ENCODE measurements at regions of chr4 and their contacts with region 1.

Region 1: GRCh38 chr4:40897557-40898203 is 147.9 kb downstream of the NSUN7 start:
- DNase-seq: peak; percentile 53
- ATAC-seq: peak; percentile 92
- H3K4me3 ChIP-seq: no peak overlapping the region
- H3K27ac ChIP-seq: no peak overlapping the region
- H3K4me1 ChIP-seq: no peaks in the 10 kb centered on the region
- H3K27me3 ChIP-seq: no peaks in the 10 kb centered on the region
- CTCF ChIP-seq: peak; percentile 82
- EP300 ChIP-seq: no peak
- POLR2A ChIP-seq: no peak
- RAD21 ChIP-seq: no peak; the same call in 1 of the 2 replicates

Region 2: GRCh38 chr4:40333921-40334352 is 563.7 kb before region 1 on chr4:
- CTCF ChIA-PET with region 1: no interaction called
- POLR2A ChIA-PET with region 1: no interaction called
- in situ Hi-C with region 1: no loop called
- intact Hi-C with region 1: no loop called
- DNase-seq: no peak
- ATAC-seq: no peak
- H3K4me3 ChIP-seq: no peak overlapping the region
- H3K27ac ChIP-seq: no peak overlapping the region
- H3K4me1 ChIP-seq: peaks cover 9% of the 10 kb centered on the region
- H3K27me3 ChIP-seq: peaks cover 2 to 9% of the 10 kb centered on the region in 2 experiments; a peak in 4 of 5 replicates
- CTCF ChIP-seq: no peak
- EP300 ChIP-seq: no peak
- POLR2A ChIP-seq: no peak
- RAD21 ChIP-seq: no peak

Region 3: DNA sequence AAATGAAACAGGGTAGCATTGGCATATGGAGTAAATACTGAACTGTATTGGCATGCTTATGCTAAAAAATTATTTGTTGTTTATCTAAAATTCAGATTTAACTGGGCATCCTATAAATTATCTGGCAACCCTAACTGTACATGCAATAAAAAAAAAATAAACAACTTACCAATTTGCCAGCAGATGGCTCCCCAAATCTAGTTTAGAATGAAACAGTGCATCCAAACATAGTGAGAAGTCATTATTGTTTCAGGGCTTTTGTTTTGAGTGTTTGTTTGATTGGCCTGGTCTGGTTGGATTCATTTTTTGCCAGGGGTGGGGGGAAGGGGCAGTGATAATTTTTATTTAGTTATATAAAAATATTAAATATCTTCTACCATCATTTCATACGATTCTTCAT is 160.8 kb before region 1 on chr4:
- CTCF ChIA-PET with region 1: interaction called, 6 read pairs
- POLR2A ChIA-PET with region 1: no interaction called
- in situ Hi-C with region 1: loop called (anchors 10 kb)
- intact Hi-C with region 1: no loop called
- DNase-seq: peak; percentile 21
- ATAC-seq: no peak
- H3K4me3 ChIP-seq: no peak overlapping the region
- H3K27ac ChIP-seq: no peak overlapping the region
- H3K4me1 ChIP-seq: peaks cover 4% of the 10 kb centered on the region
- H3K27me3 ChIP-seq: no peaks in the 10 kb centered on the region; a peak in 2 of 5 replicates
- CTCF ChIP-seq: peak; percentile 56
- EP300 ChIP-seq: no peak
- POLR2A ChIP-seq: no peak
- RAD21 ChIP-seq: no peak

Region 4: DNA sequence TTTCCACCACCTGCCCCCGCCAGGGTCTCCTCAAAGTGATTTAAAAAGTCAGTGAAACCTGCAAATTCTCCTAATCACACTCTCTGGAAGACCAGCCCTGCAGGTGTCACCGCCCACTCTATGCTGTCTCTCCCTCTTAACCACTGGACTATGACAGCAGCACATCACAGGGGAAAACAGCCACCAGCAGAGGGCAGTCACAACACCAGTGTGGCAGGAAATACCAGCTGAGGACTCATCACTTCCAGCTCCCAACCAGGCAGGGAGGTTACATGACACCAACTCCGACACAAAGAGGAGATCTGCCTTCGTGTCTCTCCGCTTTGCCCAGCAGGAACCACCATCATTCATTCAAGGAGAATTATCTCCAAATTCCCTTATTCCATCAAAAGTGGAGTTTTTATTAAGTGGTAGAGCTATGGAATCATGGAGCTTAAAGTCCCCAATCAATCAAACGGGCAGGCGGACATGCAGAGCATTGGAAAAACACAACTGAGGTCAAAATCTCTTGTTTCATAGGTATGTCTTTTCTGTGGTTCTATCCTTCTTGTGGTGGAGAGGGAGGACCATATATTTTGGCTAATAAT is 56.6 kb before region 1 on chr4:
- CTCF ChIA-PET with region 1: interaction called, 5 read pairs
- POLR2A ChIA-PET with region 1: no interaction called
- in situ Hi-C with region 1: no loop called
- intact Hi-C with region 1: loop called (anchors 1 kb)
- DNase-seq: peak; percentile 70
- ATAC-seq: peak; percentile 89
- H3K4me3 ChIP-seq: no peak overlapping the region
- H3K27ac ChIP-seq: no peak overlapping the region
- H3K4me1 ChIP-seq: peaks cover 17% of the 10 kb centered on the region
- H3K27me3 ChIP-seq: no peaks in the 10 kb centered on the region
- CTCF ChIP-seq: peak; percentile 84
- EP300 ChIP-seq: no peak
- POLR2A ChIP-seq: no peak
- RAD21 ChIP-seq: peak; percentile 29; the same call in 1 of the 2 replicates